Heart right ventricle (tissue), 16 donors: ENCODE measurements at regions of chr3 and their contacts with region 1.

Region 1: GRCh38 chr3:170869645-170870593 is at the start of gene RPL22L1:
- DNase-seq: peak; percentile 92 to 93
- ATAC-seq: peak; percentile 97 to 100 (median 99)
- H3K4me3 ChIP-seq: peak within 1 kb of the TSS; percentile 48 to 83 (median 70)
- H3K27ac ChIP-seq: peak within 1 kb of the TSS in 9 of 10 donors; percentile 64 to 90 (median 81)
- H3K4me1 ChIP-seq: peaks cover 0 to 38% (median 23%) of the 10 kb centered on the region in 9 donors
- H3K27me3 ChIP-seq: no peaks in the 10 kb centered on the region
- CTCF ChIP-seq: peak in 4 of 9 donors; percentile 5 to 48 (median 17)
- total RNA-seq, gene RPL22L1: 8.9 to 32.3 (median 11.8) TPM

Region 2: GRCh38 chr3:170908235-170909116 is 38.6 kb after region 1 on chr3 and contains the start of gene EIF5A2:
- intact Hi-C with region 1: loop called in 2 of 10 experiments (anchors 2 to 5 kb)
- DNase-seq: peak; percentile 95 to 96
- ATAC-seq: peak; percentile 98 to 99 (median 98)
- H3K4me3 ChIP-seq: peak within 1 kb of the TSS; percentile 59 to 80 (median 74)
- H3K27ac ChIP-seq: peak within 1 kb of the TSS in 9 of 10 donors; percentile 25 to 75 (median 68)
- H3K4me1 ChIP-seq: peaks cover 0 to 18% (median 10%) of the 10 kb centered on the region in 9 donors
- H3K27me3 ChIP-seq: no peaks in the 10 kb centered on the region
- CTCF ChIP-seq: peak in 2 of 9 donors; percentile 9 to 10
- total RNA-seq, gene EIF5A2: 4.8 to 14.8 (median 9.5) TPM

Region 3: GRCh38 chr3:171192176-171192854 is 322.4 kb after region 1 on chr3:
- intact Hi-C with region 1: no loop called
- DNase-seq: no peak
- ATAC-seq: no peak
- H3K4me3 ChIP-seq: no peak overlapping the region
- H3K27ac ChIP-seq: no peak overlapping the region
- H3K4me1 ChIP-seq: peaks cover 0 to 13% (median 4%) of the 10 kb centered on the region in 9 donors
- H3K27me3 ChIP-seq: no peaks in the 10 kb centered on the region
- CTCF ChIP-seq: no peak